ENCODE measurements at regions of chr19 and their contacts with region 1.

Region 1: DNA sequence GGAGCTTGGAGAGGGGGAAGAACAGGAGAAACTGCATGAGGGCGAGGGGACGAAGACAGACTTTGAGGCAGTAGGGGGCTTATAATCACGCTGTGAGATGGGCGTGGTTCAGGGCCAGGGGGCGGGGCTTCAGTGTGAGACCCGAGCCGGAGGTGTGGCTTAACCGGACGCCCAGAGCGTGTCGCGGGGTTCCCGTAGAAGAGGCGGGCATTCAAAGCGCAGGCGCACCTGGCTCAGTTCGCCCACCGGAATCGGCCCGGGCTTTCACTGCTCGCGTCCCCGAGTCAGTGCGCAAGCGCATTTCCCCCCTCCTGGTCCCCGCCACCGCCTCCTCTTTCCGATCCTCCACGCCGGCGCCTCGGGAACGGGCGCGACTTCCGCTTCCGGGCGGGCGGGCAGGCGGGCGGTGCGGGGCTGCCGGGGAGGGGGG is 225 bp upstream of the ZNF865 start:
- DNase-seq: peak; percentile 99
- H3K4me3 Mint-ChIP-seq: peak overlapping the region; percentile 76
- H3K27ac Mint-ChIP-seq: peak overlapping the region; percentile 95
- H3K4me1 Mint-ChIP-seq: peaks cover 53% of the 10 kb centered on the region
- H3K27me3 Mint-ChIP-seq: no peaks in the 10 kb centered on the region

Region 2: DNA sequence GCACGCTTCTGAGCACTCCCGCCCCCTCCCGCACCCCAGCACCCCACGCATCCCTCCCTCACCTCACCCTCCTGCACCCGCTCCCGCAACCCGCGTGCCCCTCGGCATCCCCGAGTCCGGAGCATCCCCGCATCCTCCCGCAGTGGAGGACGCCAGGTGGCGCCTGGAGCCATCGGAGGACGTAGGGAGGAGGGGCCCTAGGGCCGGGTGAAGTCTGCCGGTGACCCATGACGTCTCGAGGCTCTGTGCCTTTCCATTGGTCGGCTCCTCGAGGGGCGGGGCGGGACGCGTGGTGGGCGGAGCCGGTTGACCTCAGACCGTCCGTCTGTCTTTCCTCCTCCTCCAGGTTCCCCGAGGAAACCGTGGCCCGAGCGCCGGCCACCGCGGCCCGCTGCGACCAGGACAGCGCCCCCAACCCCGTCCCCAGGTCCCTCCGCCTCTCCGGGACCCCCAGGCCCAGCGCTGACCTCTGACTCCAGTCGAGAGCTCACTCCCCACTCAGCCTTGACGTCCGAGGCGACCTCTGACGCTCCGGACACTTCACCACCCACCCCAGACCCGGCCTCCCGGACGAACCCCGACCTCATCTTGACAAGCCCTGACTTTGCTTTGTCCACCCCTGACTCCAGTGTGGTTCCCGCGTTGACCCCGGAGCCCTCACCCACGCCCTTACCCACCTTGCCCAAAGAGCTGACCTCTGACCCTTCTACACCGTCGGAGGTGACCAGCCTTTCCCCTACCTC is 88.2 kb before region 1 on chr19:
- CTCF ChIA-PET with region 1: interaction called, 13 read pairs
- POLR2A ChIA-PET with region 1: no interaction called
- DNase-seq: peak; percentile 90
- H3K4me3 Mint-ChIP-seq: peak overlapping the region; percentile 57
- H3K27ac Mint-ChIP-seq: peak overlapping the region; percentile 59
- H3K4me1 Mint-ChIP-seq: peaks cover 5% of the 10 kb centered on the region
- H3K27me3 Mint-ChIP-seq: peaks cover 9% of the 10 kb centered on the region

Region 3: GRCh38 chr19:55563261-55563690 is 41.9 kb before region 1 on chr19:
- CTCF ChIA-PET with region 1: no interaction called
- POLR2A ChIA-PET with region 1: no interaction called
- DNase-seq: no peak
- H3K4me3 Mint-ChIP-seq: no peak overlapping the region
- H3K27ac Mint-ChIP-seq: no peak overlapping the region
- H3K4me1 Mint-ChIP-seq: no peaks in the 10 kb centered on the region
- H3K27me3 Mint-ChIP-seq: peaks cover 6% of the 10 kb centered on the region

Region 4: DNA sequence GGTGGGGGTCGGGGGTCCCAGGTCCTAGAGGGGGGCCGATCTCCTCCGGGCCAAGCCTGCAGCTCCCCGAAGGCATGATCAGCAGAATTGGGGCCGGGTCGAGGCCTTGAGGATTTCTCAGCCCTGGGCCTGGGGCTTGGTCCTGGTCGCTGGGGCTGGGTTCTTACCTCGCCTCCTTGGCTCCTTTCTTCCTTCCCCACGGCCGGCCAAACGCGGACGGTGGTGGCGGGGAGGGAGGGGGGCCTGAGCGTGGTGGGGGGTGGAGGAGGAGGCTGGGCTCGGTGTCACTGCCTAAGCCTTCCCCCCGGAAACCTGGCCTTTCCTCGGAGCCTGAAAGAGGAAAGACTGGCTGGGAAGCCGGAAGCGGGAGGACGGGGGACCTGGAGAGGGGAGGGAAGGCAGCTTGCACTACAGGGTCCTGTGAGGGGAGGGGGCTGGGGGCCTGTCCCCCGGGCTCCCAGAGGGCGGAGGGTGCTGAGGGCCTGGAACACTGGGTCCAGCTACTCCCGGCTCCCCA is 24.5 kb before region 1 on chr19 and contains the start of gene ZNF579:
- CTCF ChIA-PET with region 1: interaction called, 9 read pairs
- POLR2A ChIA-PET with region 1: interaction called, 12 read pairs
- DNase-seq: peak; percentile 75
- H3K4me3 Mint-ChIP-seq: peak within 1 kb of the TSS; percentile 84
- H3K27ac Mint-ChIP-seq: peak within 1 kb of the TSS; percentile 71
- H3K4me1 Mint-ChIP-seq: peaks cover 25% of the 10 kb centered on the region
- H3K27me3 Mint-ChIP-seq: peaks cover 13% of the 10 kb centered on the region
- total RNA-seq, gene ZNF579: 6.4 to 6.6 TPM

Region 5: DNA sequence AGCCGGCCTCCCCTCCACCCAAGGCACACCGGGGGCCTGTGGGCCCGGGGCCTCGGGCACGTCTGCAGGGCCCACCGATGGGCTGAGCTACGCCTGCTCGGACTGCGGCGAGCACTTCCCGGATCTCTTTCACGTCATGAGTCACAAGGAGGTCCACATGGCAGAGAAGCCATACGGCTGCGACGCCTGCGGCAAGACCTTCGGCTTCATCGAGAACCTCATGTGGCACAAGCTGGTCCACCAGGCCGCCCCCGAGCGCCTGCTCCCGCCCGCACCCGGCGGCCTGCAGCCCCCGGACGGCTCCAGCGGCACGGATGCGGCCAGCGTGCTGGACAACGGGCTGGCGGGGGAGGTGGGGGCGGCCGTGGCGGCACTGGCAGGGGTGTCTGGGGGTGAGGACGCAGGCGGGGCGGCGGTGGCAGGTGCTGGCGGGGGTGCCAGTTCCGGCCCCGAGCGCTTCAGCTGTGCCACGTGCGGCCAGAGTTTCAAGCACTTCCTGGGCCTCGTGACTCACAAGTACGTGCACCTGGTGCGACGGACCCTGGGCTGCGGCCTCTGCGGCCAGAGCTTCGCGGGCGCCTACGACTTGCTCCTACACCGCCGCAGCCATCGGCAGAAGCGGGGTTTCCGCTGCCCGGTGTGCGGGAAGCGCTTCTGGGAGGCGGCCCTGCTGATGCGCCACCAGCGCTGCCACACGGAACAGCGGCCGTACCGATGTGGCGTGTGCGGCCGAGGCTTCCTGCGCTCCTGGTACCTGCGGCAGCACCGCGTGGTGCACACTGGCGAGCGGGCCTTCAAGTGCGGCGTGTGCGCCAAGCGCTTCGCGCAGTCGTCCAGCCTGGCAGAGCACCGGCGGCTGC is 10.5 kb after region 1 on chr19:
- CTCF ChIA-PET with region 1: interaction called, 9 read pairs
- POLR2A ChIA-PET with region 1: interaction called, 11 read pairs
- DNase-seq: no peak
- H3K4me3 Mint-ChIP-seq: no peak overlapping the region
- H3K27ac Mint-ChIP-seq: no peak overlapping the region
- H3K4me1 Mint-ChIP-seq: peaks cover 15% of the 10 kb centered on the region
- H3K27me3 Mint-ChIP-seq: no peaks in the 10 kb centered on the region

Region 6: GRCh38 chr19:55624109-55625003 is 19.1 kb after region 1 on chr19 and contains the start of gene ZNF784:
- CTCF ChIA-PET with region 1: interaction called, 56 read pairs
- POLR2A ChIA-PET with region 1: interaction called, 53 read pairs
- DNase-seq: peak; percentile 94
- H3K4me3 Mint-ChIP-seq: peak within 1 kb of the TSS; percentile 78
- H3K27ac Mint-ChIP-seq: peak within 1 kb of the TSS; percentile 93
- H3K4me1 Mint-ChIP-seq: peaks cover 50% of the 10 kb centered on the region
- H3K27me3 Mint-ChIP-seq: peaks cover 7% of the 10 kb centered on the region
- total RNA-seq, gene ZNF784: 6.4 to 7.4 TPM

Region 7: GRCh38 chr19:55653758-55654539 is 48.7 kb after region 1 on chr19:
- CTCF ChIA-PET with region 1: interaction called, 14 read pairs
- POLR2A ChIA-PET with region 1: interaction called, 8 read pairs
- DNase-seq: peak; percentile 100
- H3K4me3 Mint-ChIP-seq: peak overlapping the region; percentile 83
- H3K27ac Mint-ChIP-seq: peak overlapping the region; percentile 94
- H3K4me1 Mint-ChIP-seq: peaks cover 39% of the 10 kb centered on the region
- H3K27me3 Mint-ChIP-seq: no peaks in the 10 kb centered on the region